Cardiac septum (tissue), 1 donor: ENCODE measurements at regions of chr11 and their contacts with region 1.

Region 1: GRCh38 chr11:76235233-76236091 is 29.2 kb upstream of the WNT11 start:
- DNase-seq: peak; percentile 91

Region 2: DNA sequence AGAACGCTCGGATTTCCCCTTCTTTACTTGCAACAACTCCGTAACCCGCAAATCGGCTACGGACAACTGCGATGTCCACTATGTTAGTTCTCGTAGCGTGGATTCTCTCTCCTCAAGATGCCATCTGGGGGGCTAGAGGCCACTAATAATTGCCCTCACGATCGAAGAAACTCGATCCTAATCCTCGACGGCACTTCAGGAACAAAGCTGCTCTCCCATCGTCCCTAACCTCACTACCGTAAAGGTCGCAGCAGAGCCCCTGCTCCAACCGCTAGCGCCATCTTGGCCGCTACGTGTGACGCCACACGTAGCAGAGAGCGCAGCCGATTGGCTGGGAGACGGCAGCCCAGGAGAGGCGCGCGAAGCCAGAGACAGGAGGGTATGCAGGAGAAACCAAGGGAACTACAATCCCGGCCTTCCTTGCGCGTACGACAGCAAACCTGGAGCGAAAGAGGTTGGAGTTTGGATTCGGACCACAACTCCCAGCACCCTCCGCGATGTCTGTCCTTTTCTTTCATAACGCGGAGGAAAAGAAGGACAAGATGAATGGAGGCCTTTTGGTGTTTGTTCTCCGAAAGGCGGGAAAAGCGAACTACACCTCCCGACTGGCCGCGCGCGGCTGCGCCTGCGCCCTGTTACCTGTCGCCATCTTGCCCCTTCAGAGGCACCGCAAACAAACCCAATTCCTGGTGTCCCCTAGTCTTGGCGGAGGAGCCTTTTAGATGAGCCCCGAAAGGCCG is 209.1 kb after region 1 on chr11 and contains the start of gene EMSY:
- intact Hi-C with region 1: loop called (anchors 10 kb)
- DNase-seq: peak; percentile 99
- total RNA-seq, gene EMSY: 17.0 TPM